ENCODE measurements at regions of chr18 and their contacts with region 1.

Region 1: GRCh38 chr18:2104620-2105462 is 466.5 kb downstream of the METTL4 start:
- ATAC-seq: peak in 4 of 8 experiments; percentile 36 to 100 (median 97)
- H3K4me3 ChIP-seq: no peak overlapping the region
- H3K27ac ChIP-seq: no peak overlapping the region
- H3K4me1 ChIP-seq: no peaks in the 10 kb centered on the region

Region 2: DNA sequence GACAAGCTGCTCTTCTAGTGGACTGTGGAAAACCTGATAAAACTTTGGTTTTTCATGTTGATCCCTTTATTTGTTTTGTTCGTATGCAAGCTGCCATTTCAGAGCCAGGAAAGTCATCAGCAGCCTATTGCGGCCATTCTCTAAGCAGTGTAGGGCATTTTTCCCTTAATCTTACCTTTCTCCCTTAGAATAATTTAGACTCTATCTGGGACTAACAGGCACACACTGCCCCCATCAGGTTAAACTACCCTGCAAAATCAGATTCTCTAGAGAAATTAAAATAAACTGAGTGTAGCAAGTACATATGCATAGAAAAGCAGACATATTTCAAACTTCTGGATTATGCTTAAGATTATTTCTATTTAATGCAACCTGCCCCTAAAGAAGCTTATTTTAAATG is 119.0 kb after region 1 on chr18:
- in situ Hi-C with region 1: loop called in 1 of 9 experiments (anchors 25 kb)
- ATAC-seq: peak; percentile 44 to 95 (median 67)
- H3K4me3 ChIP-seq: no peak overlapping the region
- H3K27ac ChIP-seq: no peak overlapping the region
- H3K4me1 ChIP-seq: peaks cover 0 to 9% of the 10 kb centered on the region in 2 donors

Region 3: GRCh38 chr18:2312440-2312839 is 207.6 kb after region 1 on chr18:
- in situ Hi-C with region 1: no loop called
- ATAC-seq: no peak
- H3K4me3 ChIP-seq: no peak overlapping the region
- H3K27ac ChIP-seq: no peak overlapping the region
- H3K4me1 ChIP-seq: no peaks in the 10 kb centered on the region

Region 4: GRCh38 chr18:2547477-2548087 is 442.7 kb after region 1 on chr18:
- in situ Hi-C with region 1: loop called in 1 of 9 experiments (anchors 25 kb)
- ATAC-seq: peak in 5 of 8 experiments; percentile 45 to 69 (median 63)
- H3K4me3 ChIP-seq: no peak overlapping the region
- H3K27ac ChIP-seq: no peak overlapping the region
- H3K4me1 ChIP-seq: no peaks in the 10 kb centered on the region

Measured in motor neuron (in vitro differentiated cells).